ENCODE measurements at regions of chr15 and their contacts with region 1.

Region 1: GRCh38 chr15:60840306-60840702 is 361.4 kb upstream of the ICE2 start:
- DNase-seq: peak; percentile 36
- H3K4me3 Mint-ChIP-seq: peak overlapping the region; percentile 68
- H3K27ac Mint-ChIP-seq: peak overlapping the region; percentile 74
- H3K4me1 Mint-ChIP-seq: peaks cover 74% of the 10 kb centered on the region
- H3K27me3 Mint-ChIP-seq: peaks cover 3% of the 10 kb centered on the region

Region 2: DNA sequence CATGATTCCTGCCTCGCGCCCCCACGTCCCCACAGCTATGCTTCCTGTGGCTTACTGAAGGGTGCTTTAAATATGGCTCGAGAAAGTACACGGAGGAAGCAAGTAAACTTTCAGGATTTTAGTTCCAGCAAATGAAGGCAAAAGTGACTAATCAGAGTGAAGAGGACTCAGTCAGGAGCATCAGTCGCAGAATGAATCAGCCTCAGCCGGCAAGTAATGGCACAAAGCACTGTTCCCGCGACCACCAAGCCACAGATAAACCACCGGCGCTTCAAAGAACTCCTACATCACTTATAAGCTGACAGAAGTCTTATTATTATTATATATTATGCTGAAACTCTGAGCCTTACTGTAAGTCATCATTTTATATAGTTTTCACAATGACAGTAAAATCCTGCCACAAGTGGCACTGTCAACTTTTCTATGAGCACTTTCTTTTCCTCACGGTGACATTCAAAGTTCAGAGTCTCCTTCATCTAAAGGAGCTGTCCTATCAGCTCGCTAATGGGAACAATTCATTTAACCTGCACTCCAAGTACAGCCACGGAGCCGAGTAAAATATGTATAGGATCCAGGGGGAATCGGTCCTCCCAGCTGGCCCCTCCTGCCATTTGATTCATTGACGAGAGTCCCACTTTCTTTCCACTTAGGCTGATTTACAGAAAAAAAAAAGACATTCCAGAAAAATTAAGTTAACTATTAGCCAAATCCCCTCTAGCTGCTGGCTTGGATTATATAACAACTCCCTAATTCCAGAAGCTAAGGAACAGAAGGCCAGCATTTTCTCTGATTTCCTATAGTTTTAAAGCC is 144.4 kb before region 1 on chr15:
- CTCF ChIA-PET with region 1: interaction called, 3 read pairs
- POLR2A ChIA-PET with region 1: interaction called, 4 read pairs
- intact Hi-C with region 1: loop called (anchors 1 kb)
- DNase-seq: peak; percentile 95
- H3K4me3 Mint-ChIP-seq: peak overlapping the region; percentile 57
- H3K27ac Mint-ChIP-seq: peak overlapping the region; percentile 80
- H3K4me1 Mint-ChIP-seq: peaks cover 84% of the 10 kb centered on the region
- H3K27me3 Mint-ChIP-seq: no peaks in the 10 kb centered on the region

Region 3: DNA sequence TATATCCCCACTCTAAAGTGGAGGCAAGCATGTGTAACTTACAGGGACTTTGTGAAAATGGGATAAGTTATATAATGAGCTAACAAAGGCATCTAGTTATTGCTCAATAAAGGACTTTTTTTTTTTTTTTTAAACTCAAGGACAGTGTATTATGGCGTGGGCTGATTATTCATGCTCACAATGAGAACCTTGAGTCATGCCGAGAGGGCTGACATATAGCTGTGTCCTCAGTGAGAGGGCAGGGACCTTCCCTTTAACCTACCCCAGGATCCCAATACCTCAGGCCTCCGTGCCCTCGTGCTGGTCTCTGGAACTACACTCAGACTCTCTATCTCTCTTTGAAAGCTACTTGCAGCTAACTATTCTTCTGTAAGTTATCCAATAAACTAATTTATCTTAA is 41.5 kb before region 1 on chr15:
- CTCF ChIA-PET with region 1: interaction called, 4 read pairs
- POLR2A ChIA-PET with region 1: interaction called, 5 read pairs
- intact Hi-C with region 1: loop called (anchors 1 kb)
- DNase-seq: peak; percentile 84
- H3K4me3 Mint-ChIP-seq: peak overlapping the region; percentile 28
- H3K27ac Mint-ChIP-seq: peak overlapping the region; percentile 82
- H3K4me1 Mint-ChIP-seq: peaks cover 90% of the 10 kb centered on the region
- H3K27me3 Mint-ChIP-seq: no peaks in the 10 kb centered on the region

Region 4: GRCh38 chr15:60854858-60855564 is 14.7 kb after region 1 on chr15:
- CTCF ChIA-PET with region 1: interaction called, 8 read pairs
- POLR2A ChIA-PET with region 1: interaction called, 12 read pairs
- intact Hi-C with region 1: loop called (anchors 2 kb)
- DNase-seq: peak; percentile 39
- H3K4me3 Mint-ChIP-seq: no peak overlapping the region
- H3K27ac Mint-ChIP-seq: peak overlapping the region; percentile 1
- H3K4me1 Mint-ChIP-seq: peaks cover 45% of the 10 kb centered on the region
- H3K27me3 Mint-ChIP-seq: no peaks in the 10 kb centered on the region

Region 5: DNA sequence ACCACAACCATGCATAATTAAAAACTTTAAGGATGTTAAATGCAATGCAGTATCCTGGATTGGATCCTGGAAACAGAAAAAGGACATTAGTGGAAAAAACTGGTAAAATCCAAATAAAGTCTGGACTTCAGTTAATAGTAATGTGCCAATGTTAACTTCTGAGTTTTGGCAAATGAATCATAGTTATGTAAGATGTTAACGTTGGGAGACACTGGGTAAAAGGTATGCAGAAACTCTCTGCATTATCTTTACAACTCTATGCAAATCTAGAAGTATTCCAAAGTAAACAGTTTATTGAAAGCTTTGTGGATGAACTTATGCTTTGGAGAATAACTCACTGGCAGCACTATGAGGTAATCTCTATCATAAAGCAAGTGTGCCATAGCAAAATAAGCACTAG is 31.4 kb after region 1 on chr15:
- CTCF ChIA-PET with region 1: no interaction called
- POLR2A ChIA-PET with region 1: no interaction called
- intact Hi-C with region 1: no loop called
- DNase-seq: no peak
- H3K4me3 Mint-ChIP-seq: no peak overlapping the region
- H3K27ac Mint-ChIP-seq: no peak overlapping the region
- H3K4me1 Mint-ChIP-seq: no peaks in the 10 kb centered on the region
- H3K27me3 Mint-ChIP-seq: no peaks in the 10 kb centered on the region